ENCODE measurements at regions of chr5 and their contacts with region 1.

Region 1: GRCh38 chr5:170216266-170216864 is 16.4 kb upstream of the C5orf58 start:
- H3K4me3 Mint-ChIP-seq: no peak overlapping the region
- H3K27ac Mint-ChIP-seq: no peak overlapping the region
- H3K4me1 Mint-ChIP-seq: peaks cover 6% of the 10 kb centered on the region
- H3K27me3 Mint-ChIP-seq: no peaks in the 10 kb centered on the region

Region 2: GRCh38 chr5:170100066-170100943 is 116.1 kb before region 1 on chr5:
- intact Hi-C with region 1: loop called (anchors 1 kb)
- H3K4me3 Mint-ChIP-seq: no peak overlapping the region
- H3K27ac Mint-ChIP-seq: peak overlapping the region; percentile 1
- H3K4me1 Mint-ChIP-seq: peaks cover 33% of the 10 kb centered on the region
- H3K27me3 Mint-ChIP-seq: peaks cover 5% of the 10 kb centered on the region